ENCODE measurements at regions of chr5 and their contacts with region 1.

Region 1: GRCh38 chr5:159286420-159287035 is 23.4 kb downstream of the UBLCP1 start:
- DNase-seq: no peak
- H3K4me3 ChIP-seq: no peak overlapping the region
- H3K27ac ChIP-seq: no peak overlapping the region
- H3K4me1 ChIP-seq: 0 out of 2 replicates have a peak, but pooled peaks cover 5% of the 10 kb centered on the region
- H3K27me3 ChIP-seq: no peaks in the 10 kb centered on the region
- CTCF ChIP-seq: peak; percentile 68

Region 2: DNA sequence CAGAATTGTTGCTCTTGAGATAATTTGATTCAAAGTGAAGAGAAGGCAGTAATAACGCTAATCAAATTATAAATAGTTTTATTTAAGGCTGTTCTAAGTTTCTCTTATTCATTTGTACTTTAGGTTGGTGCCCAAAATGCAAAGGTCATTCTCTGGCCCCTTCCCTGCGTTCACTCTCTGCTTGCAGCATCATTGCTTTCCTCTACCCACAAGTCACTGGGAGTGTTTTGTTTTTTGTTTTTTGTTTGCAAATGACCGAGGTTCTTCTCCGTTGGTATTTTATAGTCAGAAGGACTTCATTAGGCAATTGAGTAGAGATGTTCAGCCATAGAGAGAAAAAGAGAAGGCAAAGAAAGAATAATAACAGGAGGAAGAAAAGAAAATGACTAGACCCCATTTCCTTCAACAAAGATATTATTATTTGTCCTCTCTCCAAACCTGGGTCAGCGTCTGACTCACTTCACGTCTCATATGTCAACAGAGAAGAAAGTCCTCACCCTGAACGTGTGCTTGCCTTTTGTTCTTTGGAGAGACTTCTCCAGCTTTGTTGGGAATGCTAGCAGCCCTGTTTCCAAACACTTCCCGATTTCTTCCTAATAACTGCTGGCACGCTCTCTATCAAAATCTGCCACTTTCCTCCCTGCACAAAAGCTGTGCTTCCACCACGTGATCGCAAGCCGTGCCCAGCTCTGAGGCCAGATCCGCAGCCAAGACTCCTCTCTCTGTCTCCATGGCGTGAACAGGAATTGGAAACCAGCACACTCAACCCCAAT is 306.6 kb before region 1 on chr5:
- CTCF ChIA-PET with region 1: no interaction called
- POLR2A ChIA-PET with region 1: no interaction called
- intact Hi-C with region 1: no loop called
- DNase-seq: no peak
- H3K4me3 ChIP-seq: no peak overlapping the region
- H3K27ac ChIP-seq: no peak overlapping the region
- H3K4me1 ChIP-seq: no peaks in the 10 kb centered on the region
- H3K27me3 ChIP-seq: peaks cover 27% of the 10 kb centered on the region
- CTCF ChIP-seq: no peak

Region 3: GRCh38 chr5:159178978-159179377 is 107.5 kb before region 1 on chr5:
- CTCF ChIA-PET with region 1: no interaction called
- POLR2A ChIA-PET with region 1: interaction called, 17 read pairs
- intact Hi-C with region 1: no loop called
- DNase-seq: peak; percentile 31 to 68
- H3K4me3 ChIP-seq: no peak overlapping the region
- H3K27ac ChIP-seq: peak overlapping the region; percentile 38
- H3K4me1 ChIP-seq: peaks cover 37% of the 10 kb centered on the region
- H3K27me3 ChIP-seq: no peaks in the 10 kb centered on the region
- CTCF ChIP-seq: no peak

Region 4: DNA sequence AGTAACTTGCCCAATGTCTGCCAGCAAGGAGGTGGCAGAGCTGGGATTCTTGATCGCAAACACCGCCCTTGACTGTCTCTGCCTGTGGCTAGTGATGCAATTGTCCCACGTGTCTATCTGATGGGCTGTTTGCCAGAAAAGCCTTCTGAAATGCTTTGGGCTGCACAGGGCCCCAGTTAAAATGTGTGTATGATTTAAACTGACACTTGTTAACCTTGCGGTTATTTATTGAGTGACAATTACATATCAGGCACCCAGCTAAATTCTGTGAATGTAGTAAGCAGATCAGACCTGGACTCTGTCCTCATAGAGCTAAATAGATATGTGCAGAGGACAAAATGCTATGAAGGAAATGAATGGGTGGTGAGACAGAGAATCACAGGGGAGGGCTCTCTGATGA is 55.4 kb after region 1 on chr5:
- CTCF ChIA-PET with region 1: no interaction called
- POLR2A ChIA-PET with region 1: no interaction called
- intact Hi-C with region 1: loop called (anchors 5 kb)
- DNase-seq: peak; percentile 83 to 88
- H3K4me3 ChIP-seq: no peak overlapping the region
- H3K27ac ChIP-seq: no peak overlapping the region
- H3K4me1 ChIP-seq: peaks cover 37% of the 10 kb centered on the region
- H3K27me3 ChIP-seq: peaks cover 25% of the 10 kb centered on the region
- CTCF ChIP-seq: no peak

Region 5: GRCh38 chr5:159773062-159773924 is 486.8 kb after region 1 on chr5:
- CTCF ChIA-PET with region 1: no interaction called
- POLR2A ChIA-PET with region 1: no interaction called
- intact Hi-C with region 1: loop called (anchors 5 kb)
- DNase-seq: peak; percentile 71 to 83
- H3K4me3 ChIP-seq: peak overlapping the region; percentile 61
- H3K27ac ChIP-seq: peak overlapping the region; percentile 66
- H3K4me1 ChIP-seq: peaks cover 33% of the 10 kb centered on the region
- H3K27me3 ChIP-seq: no peaks in the 10 kb centered on the region
- CTCF ChIP-seq: peak; percentile 38; the same call in 1 of the 2 replicates

Region 6: GRCh38 chr5:160399402-160400353 is 1113.2 kb after region 1 on chr5 and contains the start of gene FAM200C:
- CTCF ChIA-PET with region 1: no interaction called
- POLR2A ChIA-PET with region 1: no interaction called
- intact Hi-C with region 1: loop called (anchors 10 kb)
- DNase-seq: peak; percentile 82 to 92
- H3K4me3 ChIP-seq: peak within 1 kb of the TSS; percentile 60
- H3K27ac ChIP-seq: peak within 1 kb of the TSS; percentile 38
- H3K4me1 ChIP-seq: peaks cover 11% of the 10 kb centered on the region
- H3K27me3 ChIP-seq: no peaks in the 10 kb centered on the region
- CTCF ChIP-seq: no peak
- total RNA-seq, gene FAM200C: 8.6 and 10.5 TPM in 2 replicates